ENCODE measurements at regions of chr5 and their contacts with region 1.

Region 1: DNA sequence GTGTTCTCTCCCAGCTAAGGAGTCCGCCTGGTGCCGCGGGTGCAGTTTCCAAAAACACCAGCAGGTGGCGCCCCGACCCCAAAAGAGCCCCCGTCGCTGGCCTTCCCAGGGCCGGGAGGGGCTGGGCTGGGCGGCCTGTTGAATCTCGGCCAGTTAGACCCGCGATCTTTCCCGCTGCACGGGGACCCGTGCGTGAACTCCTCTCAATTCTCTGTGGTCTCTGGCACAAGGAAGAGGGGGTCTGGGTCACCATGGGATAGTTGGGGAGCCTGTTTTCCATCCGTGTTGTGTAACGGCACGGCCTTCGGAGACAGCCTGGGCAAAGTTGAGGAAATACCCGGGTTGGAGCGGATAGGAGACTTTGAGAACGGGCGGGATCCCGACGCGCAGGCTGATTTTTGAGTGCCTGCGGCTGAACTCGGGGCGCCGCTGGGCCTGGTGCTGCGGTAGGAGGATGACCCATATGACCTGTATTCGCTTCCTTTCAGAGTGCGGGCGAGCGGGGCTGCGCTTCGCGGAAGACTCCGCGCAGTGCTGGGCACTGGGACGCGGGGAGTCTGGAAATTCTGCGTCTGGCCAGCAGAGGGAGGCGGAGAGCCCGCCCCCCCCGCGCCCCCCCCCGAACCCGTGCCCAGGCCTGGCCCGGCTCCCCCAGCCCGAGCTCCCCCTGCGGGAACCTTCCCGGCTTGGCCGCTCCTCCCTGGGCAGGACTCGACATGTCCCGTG is 7.9 kb upstream of the PSD2 start:
- DNase-seq: peak; percentile 89 to 96 (median 94)
- H3K4me3 ChIP-seq: peak overlapping the region; percentile 46 to 91 (median 70)
- H3K27ac ChIP-seq: peak overlapping the region; percentile 86 to 100 (median 97)
- H3K27me3 ChIP-seq: no peaks in the 10 kb centered on the region
- CTCF ChIP-seq: peak; percentile 83 to 99 (median 94)

Region 2: GRCh38 chr5:139828207-139828895 is 40.6 kb after region 1 on chr5:
- intact Hi-C with region 1: loop called in 1 of 2 experiments (anchors 5 kb)
- DNase-seq: peak in 9 of 10 donors; percentile 43 to 82 (median 66)
- H3K4me3 ChIP-seq: no peak overlapping the region
- H3K27ac ChIP-seq: peak overlapping the region in 58 of 59 donors; percentile 31 to 94 (median 86)
- H3K27me3 ChIP-seq: no peaks in the 10 kb centered on the region
- CTCF ChIP-seq: peak in 5 of 56 donors; percentile 4 to 23 (median 10)

Region 3: GRCh38 chr5:139844472-139845145 is 56.9 kb after region 1 on chr5:
- intact Hi-C with region 1: loop called (anchors 1 to 5 kb)
- DNase-seq: peak; percentile 44 to 91 (median 84)
- H3K4me3 ChIP-seq: no peak overlapping the region
- H3K27ac ChIP-seq: peak overlapping the region in 11 of 59 donors; percentile 9 to 63 (median 24)
- H3K27me3 ChIP-seq: no peaks in the 10 kb centered on the region
- CTCF ChIP-seq: peak; percentile 55 to 93 (median 83)

Region 4: DNA sequence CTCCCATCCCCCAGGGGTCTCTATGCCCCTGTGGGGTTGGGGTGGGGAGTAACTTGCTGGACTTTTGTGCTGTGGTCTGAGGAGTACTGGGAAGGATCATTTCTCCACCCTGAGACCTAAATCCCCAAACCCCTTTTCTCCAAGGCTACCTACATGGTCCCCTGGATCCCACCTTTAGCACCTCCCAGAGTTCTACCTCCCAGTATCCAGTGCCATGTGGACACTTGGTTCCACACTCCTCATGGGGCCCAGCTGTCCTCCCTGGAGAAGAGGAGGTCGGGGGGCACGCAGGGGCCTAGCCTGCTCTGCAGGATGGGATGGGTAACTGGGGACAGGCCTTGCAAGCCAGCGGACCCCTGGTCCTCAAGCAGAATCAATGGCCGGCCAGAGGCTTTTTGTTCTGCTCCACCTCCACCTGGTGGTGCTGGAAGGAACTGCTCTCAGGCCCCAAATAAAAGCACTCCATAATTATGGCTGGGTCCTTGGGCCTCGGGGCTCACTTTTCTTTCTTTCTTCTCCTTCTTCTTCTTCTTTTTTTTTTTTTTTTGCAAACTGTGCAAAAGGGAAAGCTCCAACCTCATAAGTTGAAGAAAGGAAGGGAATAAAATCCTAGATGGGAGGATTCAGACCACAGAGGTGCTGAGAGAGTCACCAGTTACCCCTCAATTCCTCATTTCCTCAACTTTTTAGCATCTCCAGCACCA is 76.3 kb after region 1 on chr5:
- intact Hi-C with region 1: loop called (anchors 1 to 2 kb)
- DNase-seq: peak; percentile 61 to 82 (median 74)
- H3K4me3 ChIP-seq: no peak overlapping the region
- H3K27ac ChIP-seq: peak overlapping the region in 57 of 59 donors; percentile 28 to 92 (median 82)
- H3K27me3 ChIP-seq: no peaks in the 10 kb centered on the region
- CTCF ChIP-seq: peak; percentile 80 to 97 (median 92)

Region 5: DNA sequence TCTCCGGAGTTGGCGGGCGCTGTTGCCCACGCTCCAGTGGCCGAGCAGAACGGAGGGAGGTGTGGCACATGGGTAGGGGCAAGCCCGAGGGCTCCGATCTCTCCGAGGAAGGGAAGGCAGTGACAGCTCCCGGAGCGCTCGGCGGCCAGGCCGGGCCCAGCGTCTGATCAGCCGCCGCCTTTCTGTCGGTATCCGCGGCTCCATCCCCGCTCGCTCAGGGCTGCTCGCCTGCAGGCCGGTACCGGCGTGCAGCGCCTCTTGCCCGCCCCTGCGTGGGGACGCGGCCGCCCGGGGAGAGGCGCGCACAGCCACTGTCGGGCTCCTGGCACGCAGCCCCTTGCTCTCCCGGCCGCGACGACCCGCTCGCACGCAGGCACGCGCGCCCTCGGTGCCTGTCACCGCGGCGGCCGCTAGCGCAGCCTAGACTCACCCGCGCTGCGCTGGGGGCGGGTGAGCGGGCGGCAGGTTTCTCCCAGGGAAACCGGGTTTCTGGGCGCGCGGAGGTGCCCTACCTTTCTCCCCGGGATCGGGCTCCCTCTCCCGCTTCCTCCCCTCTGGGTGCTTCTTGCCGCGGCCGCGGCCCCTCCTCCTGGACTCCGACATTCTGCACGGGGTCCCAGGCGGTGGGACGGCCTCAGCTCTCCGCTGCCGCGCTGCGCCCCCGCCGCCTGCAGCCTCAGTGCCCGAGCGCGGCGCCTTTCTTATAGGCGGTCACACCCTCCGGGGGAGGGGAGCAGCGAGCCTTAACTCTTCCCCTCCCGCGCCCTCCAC is 116.2 kb after region 1 on chr5:
- intact Hi-C with region 1: no loop called
- DNase-seq: peak in 7 of 10 donors; percentile 26 to 75 (median 56)
- H3K4me3 ChIP-seq: peak overlapping the region; percentile 47 to 85 (median 71)
- H3K27ac ChIP-seq: peak overlapping the region in 54 of 59 donors; percentile 7 to 89 (median 69)
- H3K27me3 ChIP-seq: no peaks in the 10 kb centered on the region
- CTCF ChIP-seq: peak in 13 of 56 donors; percentile 4 to 38 (median 21)

Region 6: DNA sequence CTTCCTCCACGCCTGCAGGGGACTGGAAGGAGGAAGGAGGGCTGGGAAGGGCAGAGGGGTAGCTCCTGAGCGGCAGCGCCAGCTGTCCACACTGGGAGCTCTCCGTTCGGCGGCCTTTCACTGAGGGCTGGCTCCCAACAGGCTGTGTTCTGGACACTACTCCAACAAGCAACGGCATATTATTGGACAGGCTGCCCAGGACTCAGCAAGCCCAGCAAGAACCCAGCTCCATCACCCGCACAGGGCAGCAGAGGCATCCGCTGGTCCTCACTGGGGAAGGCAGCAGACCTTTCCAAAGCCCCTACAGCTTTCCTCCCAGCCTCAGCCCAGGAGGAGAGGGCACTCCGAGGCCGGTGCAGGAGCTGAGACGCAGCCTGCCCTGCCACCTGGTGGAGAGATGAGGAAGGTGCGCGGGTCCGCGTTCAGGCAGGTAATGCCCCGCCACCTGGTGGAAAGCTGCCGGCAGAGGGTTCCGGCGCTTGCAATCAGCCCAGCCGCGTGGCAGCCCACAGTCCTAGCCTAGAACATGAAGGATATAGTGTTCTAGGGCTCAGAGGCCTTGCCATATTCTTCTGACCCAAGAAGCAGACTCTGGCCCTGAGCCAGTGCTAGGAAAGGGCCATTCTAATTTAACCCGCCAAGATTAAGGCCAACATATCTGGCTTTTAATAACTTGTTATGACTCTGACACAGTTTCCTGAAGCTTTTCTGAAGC is 181.0 kb after region 1 on chr5:
- intact Hi-C with region 1: loop called (anchors 1 kb)
- DNase-seq: peak; percentile 75 to 96 (median 87)
- H3K4me3 ChIP-seq: peak overlapping the region in 19 of 59 donors; percentile 1 to 54 (median 17)
- H3K27ac ChIP-seq: peak overlapping the region in 22 of 59 donors; percentile 0 to 77 (median 46)
- H3K27me3 ChIP-seq: no peaks in the 10 kb centered on the region
- CTCF ChIP-seq: peak; percentile 95 to 100 (median 100)

Region 7: GRCh38 chr5:140042643-140043500 is 255.1 kb after region 1 on chr5 and contains the start of gene NRG2:
- intact Hi-C with region 1: loop called (anchors 5 to 10 kb)
- DNase-seq: peak; percentile 62 to 89 (median 75)
- H3K4me3 ChIP-seq: peak within 1 kb of the TSS; percentile 52 to 88 (median 80)
- H3K27ac ChIP-seq: peak within 1 kb of the TSS; percentile 41 to 94 (median 85)
- H3K27me3 ChIP-seq: no peaks in the 10 kb centered on the region
- CTCF ChIP-seq: peak in 52 of 56 donors; percentile 27 to 77 (median 59)
- total RNA-seq, gene NRG2: 5.8 to 21.5 (median 11.8) TPM

Region 8: GRCh38 chr5:140157032-140157803 is 369.5 kb after region 1 on chr5:
- intact Hi-C with region 1: loop called (anchors 1 to 5 kb)
- DNase-seq: peak; percentile 81 to 91 (median 90)
- H3K4me3 ChIP-seq: peak overlapping the region; percentile 27 to 73 (median 58)
- H3K27ac ChIP-seq: peak overlapping the region; percentile 41 to 93 (median 84)
- H3K27me3 ChIP-seq: no peaks in the 10 kb centered on the region
- CTCF ChIP-seq: peak; percentile 59 to 98 (median 93)

Measured in dorsolateral prefrontal cortex (tissue), 120 donors.